AG04450 (cell line): ENCODE measurements at regions of chr11 and their contacts with region 1.

Region 1: GRCh38 chr11:62645956-62646824 is at the start of gene GANAB:
- DNase-seq: peak; percentile 93
- H3K4me3 ChIP-seq: peak within 1 kb of the TSS; percentile 93
- H3K27ac ChIP-seq: peak within 1 kb of the TSS; percentile 94
- H3K27me3 ChIP-seq: no peaks in the 10 kb centered on the region
- CTCF ChIP-seq: no peak
- polyA plus RNA-seq, gene GANAB: 369 and 464 TPM in 2 replicates

Region 2: GRCh38 chr11:62621567-62622470 is 24.4 kb before region 1 on chr11 and contains the start of gene B3GAT3:
- CTCF ChIA-PET with region 1: interaction called, 5 read pairs
- POLR2A ChIA-PET with region 1: interaction called, 10 read pairs
- DNase-seq: peak; percentile 96
- H3K4me3 ChIP-seq: peak within 1 kb of the TSS; percentile 86
- H3K27ac ChIP-seq: peak within 1 kb of the TSS; percentile 97
- H3K27me3 ChIP-seq: no peaks in the 10 kb centered on the region
- CTCF ChIP-seq: peak; percentile 13; the same call in 1 of the 2 replicates
- polyA plus RNA-seq, gene B3GAT3: 14.5 and 20.2 TPM in 2 replicates